ENCODE measurements at regions of chr14 and their contacts with region 1.

Region 1: GRCh38 chr14:91649930-91650329 is 82.0 kb downstream of the CATSPERB start:
- DNase-seq: no peak
- ATAC-seq: peak; percentile 62
- H3K4me3 Mint-ChIP-seq: no peak overlapping the region
- H3K27ac Mint-ChIP-seq: no peak overlapping the region
- H3K4me1 Mint-ChIP-seq: no peaks in the 10 kb centered on the region
- H3K27me3 Mint-ChIP-seq: peaks cover 16% of the 10 kb centered on the region
- CTCF ChIP-seq: peak; percentile 18

Region 2: GRCh38 chr14:91893007-91893406 is 243.1 kb after region 1 on chr14:
- CTCF ChIA-PET with region 1: interaction called, 3 read pairs
- POLR2A ChIA-PET with region 1: no interaction called
- intact Hi-C with region 1: loop called (anchors 5 kb)
- DNase-seq: no peak
- ATAC-seq: no peak
- H3K4me3 Mint-ChIP-seq: no peak overlapping the region
- H3K27ac Mint-ChIP-seq: no peak overlapping the region
- H3K4me1 Mint-ChIP-seq: no peaks in the 10 kb centered on the region
- H3K27me3 Mint-ChIP-seq: peaks cover 9% of the 10 kb centered on the region
- CTCF ChIP-seq: no peak

Region 3: GRCh38 chr14:91911474-91912032 is 261.6 kb after region 1 on chr14:
- CTCF ChIA-PET with region 1: interaction called, 6 read pairs
- POLR2A ChIA-PET with region 1: no interaction called
- intact Hi-C with region 1: loop called (anchors 1 kb)
- DNase-seq: peak; percentile 19
- ATAC-seq: peak; percentile 77
- H3K4me3 Mint-ChIP-seq: peak overlapping the region; percentile 61
- H3K27ac Mint-ChIP-seq: peak overlapping the region; percentile 85
- H3K4me1 Mint-ChIP-seq: peaks cover 16% of the 10 kb centered on the region
- H3K27me3 Mint-ChIP-seq: peaks cover 3% of the 10 kb centered on the region
- CTCF ChIP-seq: no peak

Measured in activated B cell treated with CpG ODN at 0.5 μM for 24 hours (primary cell).